SK-N-SH (cell line): ENCODE measurements at regions of chr2 and their contacts with region 1.

Region 1: GRCh38 chr2:25376750-25377621 is 35.3 kb upstream of the DNMT3A start:
- DNase-seq: peak; percentile 99
- H3K4me3 ChIP-seq: peak overlapping the region; percentile 21 to 45; a peak in 3 of 4 replicates
- H3K27ac ChIP-seq: peak overlapping the region in 1 of 2 experiments; percentile 70; a peak in 2 of 4 replicates
- H3K4me1 ChIP-seq: peaks cover 5 to 36% of the 10 kb centered on the region in 2 experiments; a peak in 3 of 4 replicates
- H3K27me3 ChIP-seq: no peaks in the 10 kb centered on the region
- CTCF ChIP-seq: peak; percentile 99
- EP300 ChIP-seq: no peak
- RAD21 ChIP-seq: peak; percentile 73

Region 2: DNA sequence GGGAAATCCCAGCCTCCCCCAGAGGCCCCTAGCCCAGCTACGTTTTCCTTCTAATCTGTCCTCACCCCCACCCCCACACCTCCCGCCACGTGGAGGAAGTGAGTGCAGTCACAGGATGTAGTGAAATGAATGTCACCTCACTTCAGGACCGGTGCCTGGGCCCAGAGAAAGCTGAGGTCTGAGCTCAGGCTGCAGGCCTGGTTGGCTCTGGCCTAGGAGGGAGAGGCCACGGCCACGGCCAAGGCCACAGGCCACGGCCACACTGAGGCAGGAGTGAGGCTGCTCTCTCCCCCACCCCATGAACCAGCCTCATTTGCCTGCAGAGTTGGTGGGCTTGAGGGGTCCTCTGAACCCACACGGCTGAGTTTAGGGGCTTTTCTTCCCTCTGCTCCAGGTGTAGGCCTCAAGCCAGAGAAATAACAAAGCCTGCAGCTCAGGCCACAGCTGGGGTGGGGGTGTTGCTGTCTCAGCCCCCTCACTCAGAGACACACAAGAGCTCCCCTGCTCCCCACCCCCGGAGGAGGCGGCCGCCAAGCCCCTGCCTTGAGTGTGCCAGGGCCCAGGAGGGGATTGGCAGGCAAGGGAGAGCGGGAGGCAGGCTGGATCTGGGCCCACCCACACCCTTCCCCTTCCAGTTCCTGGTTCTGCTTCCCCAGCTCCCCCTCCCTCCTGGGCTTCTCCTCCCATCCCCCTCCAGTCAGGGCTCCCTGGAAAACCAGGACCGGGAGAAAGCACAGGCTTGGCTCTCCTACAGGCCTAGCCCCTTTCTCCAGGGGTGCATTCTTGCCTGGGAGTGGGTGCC is 62.3 kb before region 1 on chr2:
- CTCF ChIA-PET with region 1: interaction called, 20 read pairs
- POLR2A ChIA-PET with region 1: no interaction called
- DNase-seq: peak; percentile 97
- H3K4me3 ChIP-seq: no peak overlapping the region
- H3K27ac ChIP-seq: peak overlapping the region in 1 of 2 experiments; percentile 100; a peak in 2 of 4 replicates
- H3K4me1 ChIP-seq: peaks cover 13 to 69% of the 10 kb centered on the region in 2 experiments; a peak in 3 of 4 replicates
- H3K27me3 ChIP-seq: no peaks in the 10 kb centered on the region
- CTCF ChIP-seq: no peak
- EP300 ChIP-seq: peak in 1 of 2 experiments; percentile 62; a peak in 1 of 4 replicates
- RAD21 ChIP-seq: peak; percentile 21; the same call in 1 of the 2 replicates

Region 3: DNA sequence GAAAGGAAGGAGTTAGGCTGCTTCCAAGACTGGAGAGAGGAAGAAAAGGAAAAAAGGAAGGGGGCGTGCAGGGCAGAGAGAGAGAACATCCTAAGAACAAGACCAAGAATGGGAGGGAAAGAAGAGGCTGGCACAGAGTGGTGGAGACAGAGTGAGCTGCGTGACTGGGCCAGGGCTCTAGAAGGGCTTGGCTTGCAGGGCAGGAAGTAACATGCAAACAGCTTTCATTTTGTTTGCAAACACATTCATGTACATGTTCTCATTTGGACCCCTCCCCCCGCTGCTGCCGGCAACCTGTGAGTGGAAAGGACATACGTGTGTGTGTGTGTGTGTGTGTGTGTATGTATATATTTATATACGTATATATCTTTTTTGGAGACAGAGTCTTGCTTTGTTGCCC is 11.5 kb after region 1 on chr2:
- CTCF ChIA-PET with region 1: interaction called, 72 read pairs
- POLR2A ChIA-PET with region 1: no interaction called
- DNase-seq: no peak
- H3K4me3 ChIP-seq: no peak overlapping the region
- H3K27ac ChIP-seq: no peak overlapping the region
- H3K4me1 ChIP-seq: no peaks in the 10 kb centered on the region
- H3K27me3 ChIP-seq: no peaks in the 10 kb centered on the region
- CTCF ChIP-seq: no peak
- EP300 ChIP-seq: no peak
- RAD21 ChIP-seq: no peak

Region 4: DNA sequence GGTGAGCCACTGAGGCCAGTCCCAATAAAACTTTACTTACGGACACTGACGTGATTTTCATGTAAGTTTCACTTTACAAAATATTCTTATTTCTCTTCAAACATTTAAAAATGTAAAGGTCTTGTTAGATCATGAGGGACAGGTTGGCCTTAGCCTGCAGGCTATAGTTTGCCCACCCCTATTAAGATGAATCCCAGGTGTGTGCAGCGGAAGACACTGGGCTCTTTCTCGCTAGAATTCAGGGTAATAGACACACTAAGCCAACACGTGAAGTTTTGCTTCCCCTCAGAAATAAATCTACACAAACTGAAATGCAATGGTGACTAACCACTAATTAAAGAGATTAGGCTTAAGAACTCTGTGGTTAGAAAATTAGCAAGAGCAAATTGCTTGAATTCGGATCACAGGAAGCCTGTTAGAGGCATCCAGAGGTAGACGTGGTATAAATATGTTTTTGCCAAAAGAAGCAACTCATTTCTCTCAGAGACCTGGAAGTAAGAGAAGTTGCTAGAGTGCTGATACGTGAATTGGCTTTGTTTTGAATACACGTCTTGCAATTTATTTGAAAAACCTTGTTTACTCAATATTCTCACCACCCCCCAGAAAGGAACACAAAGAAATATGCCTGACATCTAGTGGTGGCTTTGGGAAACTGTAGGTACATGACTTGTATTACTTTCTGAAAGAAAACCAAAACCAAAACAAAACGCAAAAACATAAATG is 144.8 kb after region 1 on chr2:
- CTCF ChIA-PET with region 1: interaction called, 25 read pairs
- POLR2A ChIA-PET with region 1: no interaction called
- DNase-seq: peak; percentile 66
- H3K4me3 ChIP-seq: no peak overlapping the region; a peak in 1 of 4 replicates
- H3K27ac ChIP-seq: peak overlapping the region; percentile 4 to 39; a peak in 2 of 4 replicates
- H3K4me1 ChIP-seq: peaks cover 4% of the 10 kb centered on the region in 2 experiments
- H3K27me3 ChIP-seq: no peaks in the 10 kb centered on the region
- CTCF ChIP-seq: peak; percentile 95
- EP300 ChIP-seq: no peak
- RAD21 ChIP-seq: peak; percentile 94